ENCODE measurements at regions of chr2 and their contacts with region 1.

Region 1: GRCh38 chr2:95121407-95122196 is at the start of gene MRPS5:
- DNase-seq: peak; percentile 74
- H3K4me3 ChIP-seq: peak within 1 kb of the TSS; percentile 70 to 95 (median 92)
- H3K27ac ChIP-seq: peak within 1 kb of the TSS; percentile 86
- H3K4me1 ChIP-seq: peaks cover 7% of the 10 kb centered on the region
- H3K27me3 ChIP-seq: no peaks in the 10 kb centered on the region
- CTCF ChIP-seq: peak in 1 of 2 donors; percentile 9
- POLR2A ChIP-seq: peak; percentile 52
- total RNA-seq, gene MRPS5: 59.7 and 62.8 TPM in 2 replicates

Region 2: GRCh38 chr2:95165129-95166064 is 43.8 kb after region 1 on chr2 and contains the start of gene ZNF2:
- CTCF ChIA-PET with region 1: interaction called, 5 read pairs
- POLR2A ChIA-PET with region 1: interaction called, 14 read pairs
- dilution Hi-C with region 1: no loop called
- intact Hi-C with region 1: loop called (anchors 2 kb)
- DNase-seq: peak; percentile 97
- H3K4me3 ChIP-seq: peak within 1 kb of the TSS; percentile 58 to 86 (median 67)
- H3K27ac ChIP-seq: peak within 1 kb of the TSS; percentile 84
- H3K4me1 ChIP-seq: peaks cover 8% of the 10 kb centered on the region
- H3K27me3 ChIP-seq: no peaks in the 10 kb centered on the region
- CTCF ChIP-seq: peak in 1 of 2 donors; percentile 7
- POLR2A ChIP-seq: peak; percentile 87
- total RNA-seq, gene ZNF2: 4.2 and 4.4 TPM in 2 replicates

Region 3: GRCh38 chr2:95207111-95207961 is 85.7 kb after region 1 on chr2 and contains the start of gene ZNF892:
- CTCF ChIA-PET with region 1: no interaction called
- POLR2A ChIA-PET with region 1: no interaction called
- dilution Hi-C with region 1: no loop called
- intact Hi-C with region 1: loop called (anchors 10 kb)
- DNase-seq: peak; percentile 90
- H3K4me3 ChIP-seq: peak within 1 kb of the TSS; percentile 45 to 74 (median 60)
- H3K27ac ChIP-seq: no peak within 1 kb of the TSS
- H3K4me1 ChIP-seq: peaks cover 4% of the 10 kb centered on the region
- H3K27me3 ChIP-seq: no peaks in the 10 kb centered on the region
- CTCF ChIP-seq: peak in 1 of 2 donors; percentile 11
- POLR2A ChIP-seq: peak; percentile 85
- total RNA-seq, gene ZNF892: 3.7 and 3.8 TPM in 2 replicates

Region 4: DNA sequence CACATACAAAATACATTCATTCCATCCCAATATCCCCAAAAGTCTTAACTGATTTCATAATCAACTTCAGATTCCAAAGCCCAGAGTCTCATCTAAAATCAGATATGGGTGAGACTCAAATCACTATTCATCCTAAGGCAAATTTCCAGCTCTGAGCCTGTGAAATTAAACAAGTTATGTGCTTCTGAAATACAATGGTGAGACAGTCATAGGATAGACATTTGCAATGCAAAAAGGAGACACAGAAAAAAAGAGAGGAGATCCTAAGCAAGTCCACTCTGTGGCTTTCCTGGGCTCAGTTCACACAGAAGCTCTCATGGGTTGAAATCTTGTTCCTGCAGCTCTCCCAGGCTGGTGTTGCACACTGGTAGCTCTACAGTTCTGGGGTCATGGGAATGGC is 104.1 kb after region 1 on chr2:
- CTCF ChIA-PET with region 1: no interaction called
- POLR2A ChIA-PET with region 1: no interaction called
- dilution Hi-C with region 1: no loop called
- intact Hi-C with region 1: no loop called
- DNase-seq: no peak
- H3K4me3 ChIP-seq: no peak overlapping the region
- H3K27ac ChIP-seq: no peak overlapping the region
- H3K4me1 ChIP-seq: no peaks in the 10 kb centered on the region
- H3K27me3 ChIP-seq: no peaks in the 10 kb centered on the region
- CTCF ChIP-seq: no peak
- POLR2A ChIP-seq: no peak

Region 5: DNA sequence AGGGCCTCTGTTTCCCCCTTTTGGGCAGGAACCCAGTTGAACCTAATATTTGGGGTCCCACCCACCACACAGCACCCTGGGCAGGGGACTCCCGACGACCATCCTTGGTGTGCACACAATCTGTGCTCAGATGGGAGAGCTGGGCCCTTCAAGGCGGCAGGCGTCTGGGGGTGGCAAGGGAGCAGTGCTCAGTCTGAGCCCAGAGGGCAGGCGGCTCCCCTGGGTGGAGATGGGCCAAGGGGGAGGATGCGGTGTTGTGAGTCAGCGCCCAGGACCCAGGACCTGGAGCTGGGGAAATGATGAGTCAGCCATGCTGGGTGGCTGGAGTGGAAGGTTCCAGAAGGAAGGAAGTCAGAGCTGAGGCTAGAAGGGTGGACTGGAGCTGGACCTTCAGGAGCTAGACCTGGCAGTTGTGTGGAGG is 156.5 kb after region 1 on chr2:
- CTCF ChIA-PET with region 1: no interaction called
- POLR2A ChIA-PET with region 1: no interaction called
- dilution Hi-C with region 1: no loop called
- intact Hi-C with region 1: no loop called
- DNase-seq: no peak
- H3K4me3 ChIP-seq: no peak overlapping the region
- H3K27ac ChIP-seq: no peak overlapping the region
- H3K4me1 ChIP-seq: no peaks in the 10 kb centered on the region
- H3K27me3 ChIP-seq: no peaks in the 10 kb centered on the region
- CTCF ChIP-seq: no peak
- POLR2A ChIP-seq: no peak

Measured in endothelial cell of umbilical vein (primary cell).